ENCODE measurements at regions of chr11 and their contacts with region 1.

Region 1: GRCh38 chr11:129364143-129364654 is 11.4 kb upstream of the BARX2 start:
- DNase-seq: peak; percentile 74
- H3K4me3 Mint-ChIP-seq: no peak overlapping the region
- H3K27ac Mint-ChIP-seq: no peak overlapping the region
- H3K4me1 Mint-ChIP-seq: peaks cover 5% of the 10 kb centered on the region
- H3K27me3 Mint-ChIP-seq: peaks cover 46% of the 10 kb centered on the region

Region 2: GRCh38 chr11:129102756-129103155 is 261.4 kb before region 1 on chr11:
- intact Hi-C with region 1: no loop called
- DNase-seq: no peak
- H3K4me3 Mint-ChIP-seq: no peak overlapping the region
- H3K27ac Mint-ChIP-seq: no peak overlapping the region
- H3K4me1 Mint-ChIP-seq: peaks cover 4% of the 10 kb centered on the region
- H3K27me3 Mint-ChIP-seq: no peaks in the 10 kb centered on the region

Region 3: GRCh38 chr11:129695575-129696308 is 331.5 kb after region 1 on chr11:
- intact Hi-C with region 1: loop called (anchors 1 kb)
- DNase-seq: peak; percentile 41
- H3K4me3 Mint-ChIP-seq: peak overlapping the region; percentile 54
- H3K27ac Mint-ChIP-seq: no peak overlapping the region
- H3K4me1 Mint-ChIP-seq: peaks cover 11% of the 10 kb centered on the region
- H3K27me3 Mint-ChIP-seq: peaks cover 3% of the 10 kb centered on the region

Region 4: DNA sequence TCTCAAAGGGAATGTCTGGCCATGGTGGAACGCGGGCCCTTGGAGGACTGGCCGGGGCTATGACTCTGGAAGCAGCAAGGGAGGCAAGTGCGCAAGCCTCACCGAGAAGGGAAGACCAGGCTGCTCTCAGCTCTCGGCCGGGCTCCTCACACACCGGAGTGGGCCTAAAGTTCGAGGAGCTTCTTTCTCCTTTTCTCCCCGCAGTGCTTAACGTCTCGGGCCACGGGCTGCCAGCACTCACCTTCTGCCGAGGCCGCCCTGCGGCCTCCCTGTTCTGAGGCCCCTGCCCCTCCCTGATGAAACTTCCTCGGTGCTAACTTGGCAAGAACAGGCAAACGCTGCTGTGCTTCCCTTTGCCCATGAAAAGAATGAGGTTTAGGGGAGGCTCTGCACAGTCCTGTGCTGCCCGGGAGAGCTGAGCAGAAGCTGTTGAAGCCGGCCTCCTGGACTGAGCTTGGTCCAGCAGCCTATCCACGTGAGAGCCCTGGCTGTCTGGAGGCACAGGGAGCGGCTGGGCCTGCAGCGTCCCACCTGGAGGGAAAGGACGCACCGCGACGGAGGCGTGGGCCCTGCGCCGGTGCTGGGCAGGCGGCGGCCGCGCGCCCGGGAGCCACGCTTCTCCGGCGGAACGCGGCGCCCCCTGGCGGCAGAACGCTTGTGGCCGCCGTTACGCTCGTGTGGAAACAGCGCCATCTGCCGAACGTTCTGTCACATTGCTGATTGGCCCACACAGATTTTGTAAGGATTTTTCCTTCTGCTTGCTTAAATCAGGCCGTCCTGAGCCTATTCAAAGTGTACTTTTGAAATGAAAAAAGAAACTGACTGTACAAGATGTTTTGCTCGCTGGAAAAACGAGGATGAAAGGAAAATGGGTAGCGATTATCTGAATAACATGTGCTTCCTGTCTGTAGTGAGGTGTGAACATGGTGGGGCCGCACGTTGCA is 386.4 kb after region 1 on chr11:
- intact Hi-C with region 1: loop called (anchors 1 kb)
- DNase-seq: peak; percentile 72
- H3K4me3 Mint-ChIP-seq: no peak overlapping the region
- H3K27ac Mint-ChIP-seq: no peak overlapping the region
- H3K4me1 Mint-ChIP-seq: no peaks in the 10 kb centered on the region
- H3K27me3 Mint-ChIP-seq: peaks cover 18% of the 10 kb centered on the region